ENCODE measurements at regions of chr19 and their contacts with region 1.

Region 1: GRCh38 chr19:31340042-31341025 is 8.9 kb downstream of the TSHZ3 start:
- DNase-seq: peak in 1 of 2 donors; percentile 77
- ATAC-seq: peak; percentile 68 to 77 (median 70)
- H3K4me3 ChIP-seq: no peak overlapping the region
- H3K4me3 Mint-ChIP-seq: peak overlapping the region; percentile 82
- H3K27ac ChIP-seq: no peak overlapping the region
- H3K27ac Mint-ChIP-seq: peak overlapping the region; percentile 80 to 89
- H3K4me1 ChIP-seq: peaks cover 31% of the 10 kb centered on the region
- H3K4me1 Mint-ChIP-seq: peaks cover 42 to 44% of the 10 kb centered on the region in 2 donors
- H3K27me3 ChIP-seq: peaks cover 17% of the 10 kb centered on the region
- H3K27me3 Mint-ChIP-seq: peaks cover 31 to 53% of the 10 kb centered on the region in 2 donors
- CTCF ChIP-seq: no peak

Region 2: DNA sequence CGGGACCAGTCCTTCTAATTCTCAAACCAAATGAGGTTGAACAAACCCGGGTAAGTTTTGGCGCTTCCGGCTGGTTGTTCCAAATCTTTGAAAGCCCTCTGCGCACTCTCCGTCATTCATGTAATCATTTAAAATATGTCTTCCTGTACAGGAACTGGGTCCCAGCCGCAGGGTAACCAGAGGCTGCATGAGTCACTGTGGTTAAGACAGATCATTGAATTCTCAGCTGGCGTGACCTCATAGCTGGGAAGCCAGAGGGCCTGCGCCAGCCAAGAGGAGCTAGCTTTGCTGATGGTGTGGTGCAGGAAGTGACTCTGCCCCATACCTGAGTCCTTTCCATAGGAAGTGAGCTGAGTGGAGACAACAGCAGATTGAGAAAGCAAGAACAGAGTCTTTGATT is 126.2 kb before region 1 on chr19:
- intact Hi-C with region 1: loop called (anchors 1 kb)
- DNase-seq: peak; percentile 77 to 93
- ATAC-seq: peak; percentile 91 to 97 (median 92)
- H3K4me3 ChIP-seq: no peak overlapping the region
- H3K4me3 Mint-ChIP-seq: peak overlapping the region; percentile 85
- H3K27ac ChIP-seq: peak overlapping the region; percentile 78
- H3K27ac Mint-ChIP-seq: peak overlapping the region; percentile 90 to 92
- H3K4me1 ChIP-seq: peaks cover 15% of the 10 kb centered on the region
- H3K4me1 Mint-ChIP-seq: peaks cover 13 to 28% of the 10 kb centered on the region in 2 donors
- H3K27me3 ChIP-seq: no peaks in the 10 kb centered on the region
- H3K27me3 Mint-ChIP-seq: peaks cover 6 to 16% of the 10 kb centered on the region in 2 donors
- CTCF ChIP-seq: no peak